PC-9 (cell line): ENCODE measurements at regions of chr1 and their contacts with region 1.

Region 1: GRCh38 chr1:203673550-203674427 is 47.2 kb downstream of the ATP2B4 start:
- DNase-seq: peak; percentile 86 to 98
- H3K4me3 ChIP-seq: no peak overlapping the region
- H3K27ac ChIP-seq: peak overlapping the region; percentile 69
- H3K4me1 ChIP-seq: peaks cover 50% of the 10 kb centered on the region
- H3K27me3 ChIP-seq: no peaks in the 10 kb centered on the region
- CTCF ChIP-seq: peak; percentile 65

Region 2: GRCh38 chr1:203520315-203520714 is 153.5 kb before region 1 on chr1:
- CTCF ChIA-PET with region 1: interaction called, 10 read pairs
- POLR2A ChIA-PET with region 1: no interaction called
- intact Hi-C with region 1: no loop called
- DNase-seq: peak in 1 of 2 experiments; percentile 57
- H3K4me3 ChIP-seq: no peak overlapping the region
- H3K27ac ChIP-seq: peak overlapping the region; percentile 72
- H3K4me1 ChIP-seq: peaks cover 59% of the 10 kb centered on the region
- H3K27me3 ChIP-seq: no peaks in the 10 kb centered on the region
- CTCF ChIP-seq: no peak

Region 3: DNA sequence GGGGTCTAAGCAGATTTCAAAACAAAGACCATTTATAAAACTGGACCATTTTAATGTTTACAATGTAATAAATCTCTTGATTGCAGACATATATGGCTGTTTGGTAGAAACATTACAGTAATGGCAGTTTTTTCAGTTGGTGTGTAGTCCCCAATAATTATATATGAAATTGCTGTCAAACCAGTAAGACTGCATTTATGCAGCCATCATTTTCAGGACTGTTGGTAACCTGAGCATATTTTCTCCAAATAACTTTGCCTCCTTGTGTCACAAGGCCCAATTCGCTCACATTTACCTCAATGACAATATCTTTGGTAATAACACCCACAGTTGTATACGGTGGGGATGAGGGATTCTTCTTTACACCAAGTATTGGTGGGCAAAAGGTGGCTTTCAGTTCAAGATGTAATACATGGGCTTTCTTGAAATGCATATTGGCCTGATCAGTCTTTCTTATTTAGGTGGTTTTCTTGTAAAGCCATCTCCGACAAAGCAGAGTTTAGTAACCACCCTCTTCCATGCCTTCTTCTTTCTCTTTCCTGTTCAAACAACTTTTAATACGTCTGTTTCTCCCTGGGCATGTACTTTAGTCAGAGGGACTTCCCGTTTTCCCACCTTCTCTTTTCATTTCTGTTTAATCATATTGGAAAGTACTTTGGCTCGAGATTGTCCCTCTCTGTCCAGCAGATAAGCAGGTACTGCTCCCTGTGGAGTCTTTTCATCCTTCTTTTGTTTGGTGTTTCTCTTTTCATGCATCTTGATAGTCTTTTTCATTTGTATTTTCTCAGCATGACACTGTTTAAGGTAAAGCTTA is 16.8 kb before region 1 on chr1:
- CTCF ChIA-PET with region 1: no interaction called
- POLR2A ChIA-PET with region 1: interaction called, 3 read pairs
- intact Hi-C with region 1: loop called (anchors 2 kb)
- DNase-seq: peak in 1 of 2 experiments; percentile 68
- H3K4me3 ChIP-seq: no peak overlapping the region
- H3K27ac ChIP-seq: no peak overlapping the region
- H3K4me1 ChIP-seq: peaks cover 35% of the 10 kb centered on the region
- H3K27me3 ChIP-seq: no peaks in the 10 kb centered on the region
- CTCF ChIP-seq: no peak

Region 4: GRCh38 chr1:203692565-203693470 is 19.0 kb after region 1 on chr1:
- CTCF ChIA-PET with region 1: interaction called, 7 read pairs
- POLR2A ChIA-PET with region 1: interaction called, 7 read pairs
- intact Hi-C with region 1: loop called (anchors 1 kb)
- DNase-seq: peak; percentile 79 to 80
- H3K4me3 ChIP-seq: no peak overlapping the region
- H3K27ac ChIP-seq: peak overlapping the region; percentile 80
- H3K4me1 ChIP-seq: peaks cover 17% of the 10 kb centered on the region
- H3K27me3 ChIP-seq: no peaks in the 10 kb centered on the region
- CTCF ChIP-seq: no peak